Activated CD4-positive, alpha-beta memory T cell treated with anti-CD3 and anti-CD28 coated beads, Interleukin-2, amount 10 ng/mL, durations not matched to agents 7 days and 5 days (primary cell): ENCODE measurements at regions of chr14 and their contacts with region 1.

Region 1: GRCh38 chr14:52741865-52742264 is 11.9 kb downstream of the STYX start:
- DNase-seq: no peak
- H3K4me3 Mint-ChIP-seq: peak overlapping the region; percentile 66
- H3K27ac Mint-ChIP-seq: peak overlapping the region; percentile 94
- H3K4me1 Mint-ChIP-seq: peaks cover 53% of the 10 kb centered on the region
- H3K27me3 Mint-ChIP-seq: no peaks in the 10 kb centered on the region

Region 2: DNA sequence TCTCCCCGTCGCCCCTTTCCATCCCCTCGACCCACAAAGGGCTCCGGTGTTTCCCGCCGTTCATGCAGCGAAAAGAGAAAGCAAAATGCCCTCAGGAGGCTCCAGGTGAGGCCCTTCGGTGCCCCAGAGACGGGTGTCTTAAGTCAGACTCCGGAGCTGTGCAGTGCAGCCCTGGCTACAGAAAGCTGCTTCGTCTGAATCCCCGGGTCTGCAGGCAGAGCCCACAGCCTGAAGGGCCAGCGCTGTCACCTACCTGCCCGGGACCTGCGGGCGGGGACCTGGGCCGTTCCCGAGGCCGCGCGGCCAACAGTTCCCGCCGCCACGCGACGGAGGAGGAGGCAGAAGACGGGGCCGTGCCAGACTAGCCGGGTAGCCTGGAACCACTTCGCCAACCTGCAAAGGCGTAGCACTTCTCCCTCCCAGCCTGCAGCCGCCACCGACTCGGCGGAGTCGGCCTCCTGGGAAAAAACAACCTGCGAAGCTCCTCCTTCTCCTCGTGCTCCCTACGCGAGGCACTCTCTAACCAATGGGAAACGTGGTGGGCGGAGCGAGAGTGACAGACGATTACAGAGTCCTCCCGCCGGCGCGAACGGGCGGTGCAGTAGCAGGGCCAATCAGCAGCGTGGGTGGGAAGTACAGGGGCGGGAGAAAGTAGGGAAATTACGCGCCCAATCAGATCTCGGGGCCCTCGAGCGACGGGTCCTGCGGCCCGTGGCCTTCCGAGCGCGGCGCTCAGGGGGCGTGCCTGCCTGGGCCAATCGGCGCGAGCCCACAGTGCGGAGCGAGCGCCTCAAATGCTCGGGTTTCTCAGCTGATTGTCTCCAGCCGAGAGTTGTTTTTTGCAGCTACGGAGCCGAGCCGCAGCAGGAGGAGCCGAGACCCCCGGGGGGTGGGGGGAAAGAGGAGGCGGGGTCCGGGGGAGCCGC is 189.5 kb before region 1 on chr14 and contains the starts of genes GPR137C and TXNDC16:
- CTCF ChIA-PET with region 1: interaction called, 3 read pairs
- POLR2A ChIA-PET with region 1: interaction called, 27 read pairs
- DNase-seq: peak; percentile 100
- H3K4me3 Mint-ChIP-seq: peak within 1 kb of the TSS; percentile 92
- H3K27ac Mint-ChIP-seq: peak within 1 kb of the TSS; percentile 78
- H3K4me1 Mint-ChIP-seq: peaks cover 27% of the 10 kb centered on the region
- H3K27me3 Mint-ChIP-seq: peaks cover 20% of the 10 kb centered on the region
- total RNA-seq, gene GPR137C: 0.30 to 0.88 TPM
- total RNA-seq, gene TXNDC16: 8.8 to 9.4 TPM

Region 3: DNA sequence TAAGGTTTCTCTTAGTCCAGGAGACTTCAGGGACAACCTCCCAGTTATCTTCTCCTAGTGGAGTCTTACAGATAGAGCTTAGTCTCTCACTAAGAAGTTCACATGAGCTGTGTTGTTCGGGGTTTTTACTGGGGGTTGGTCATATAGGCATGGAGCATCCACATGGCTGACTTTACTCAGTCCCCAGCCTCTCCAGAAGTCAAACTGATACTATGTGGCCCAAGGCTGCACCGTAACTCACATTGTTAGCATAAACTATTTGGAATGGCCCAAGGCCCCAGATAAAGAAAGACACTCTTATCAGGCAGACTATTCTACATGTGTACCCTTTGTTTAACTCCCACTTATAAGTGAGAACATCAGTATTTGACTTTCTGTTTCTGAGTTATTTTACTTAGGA is 166.0 kb before region 1 on chr14:
- CTCF ChIA-PET with region 1: no interaction called
- POLR2A ChIA-PET with region 1: no interaction called
- DNase-seq: no peak
- H3K4me3 Mint-ChIP-seq: no peak overlapping the region
- H3K27ac Mint-ChIP-seq: no peak overlapping the region
- H3K4me1 Mint-ChIP-seq: no peaks in the 10 kb centered on the region
- H3K27me3 Mint-ChIP-seq: peaks cover 9% of the 10 kb centered on the region

Region 4: DNA sequence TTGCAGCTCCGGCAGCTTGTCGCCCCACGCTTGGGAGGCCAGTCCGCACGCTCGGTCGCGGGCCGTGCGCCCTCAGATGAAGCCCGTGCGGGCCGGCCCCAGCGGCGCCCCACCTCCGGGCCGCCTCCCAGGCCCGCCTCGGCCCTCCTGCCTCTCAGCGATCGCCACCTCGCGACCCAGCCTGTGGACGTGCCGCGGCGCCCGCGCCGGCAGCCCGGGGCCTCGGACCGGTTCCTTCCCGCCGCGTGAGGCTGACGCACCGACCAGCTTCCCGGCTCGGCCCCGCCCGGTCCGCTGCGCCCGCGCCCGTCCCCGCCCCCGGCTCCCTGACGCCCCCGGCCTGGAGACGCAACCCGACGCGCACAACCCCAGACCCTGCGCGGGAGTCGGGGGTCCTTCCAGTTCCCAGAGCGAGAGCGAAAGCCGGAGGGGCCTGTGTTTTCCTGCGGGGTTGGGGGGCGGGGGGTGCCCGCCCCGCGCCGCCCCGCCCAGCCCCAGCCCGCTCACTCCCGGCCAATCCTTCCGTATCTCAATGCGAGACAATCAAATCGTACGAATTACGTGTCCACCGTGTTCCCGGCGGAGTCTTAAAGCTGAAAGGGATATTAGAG is 46.3 kb before region 1 on chr14 and contains the start of gene ERO1A:
- CTCF ChIA-PET with region 1: interaction called, 4 read pairs
- POLR2A ChIA-PET with region 1: interaction called, 20 read pairs
- DNase-seq: peak; percentile 75
- H3K4me3 Mint-ChIP-seq: peak within 1 kb of the TSS; percentile 92
- H3K27ac Mint-ChIP-seq: peak within 1 kb of the TSS; percentile 98
- H3K4me1 Mint-ChIP-seq: peaks cover 42% of the 10 kb centered on the region
- H3K27me3 Mint-ChIP-seq: no peaks in the 10 kb centered on the region
- total RNA-seq, gene ERO1A: 256 to 270 TPM

Region 5: DNA sequence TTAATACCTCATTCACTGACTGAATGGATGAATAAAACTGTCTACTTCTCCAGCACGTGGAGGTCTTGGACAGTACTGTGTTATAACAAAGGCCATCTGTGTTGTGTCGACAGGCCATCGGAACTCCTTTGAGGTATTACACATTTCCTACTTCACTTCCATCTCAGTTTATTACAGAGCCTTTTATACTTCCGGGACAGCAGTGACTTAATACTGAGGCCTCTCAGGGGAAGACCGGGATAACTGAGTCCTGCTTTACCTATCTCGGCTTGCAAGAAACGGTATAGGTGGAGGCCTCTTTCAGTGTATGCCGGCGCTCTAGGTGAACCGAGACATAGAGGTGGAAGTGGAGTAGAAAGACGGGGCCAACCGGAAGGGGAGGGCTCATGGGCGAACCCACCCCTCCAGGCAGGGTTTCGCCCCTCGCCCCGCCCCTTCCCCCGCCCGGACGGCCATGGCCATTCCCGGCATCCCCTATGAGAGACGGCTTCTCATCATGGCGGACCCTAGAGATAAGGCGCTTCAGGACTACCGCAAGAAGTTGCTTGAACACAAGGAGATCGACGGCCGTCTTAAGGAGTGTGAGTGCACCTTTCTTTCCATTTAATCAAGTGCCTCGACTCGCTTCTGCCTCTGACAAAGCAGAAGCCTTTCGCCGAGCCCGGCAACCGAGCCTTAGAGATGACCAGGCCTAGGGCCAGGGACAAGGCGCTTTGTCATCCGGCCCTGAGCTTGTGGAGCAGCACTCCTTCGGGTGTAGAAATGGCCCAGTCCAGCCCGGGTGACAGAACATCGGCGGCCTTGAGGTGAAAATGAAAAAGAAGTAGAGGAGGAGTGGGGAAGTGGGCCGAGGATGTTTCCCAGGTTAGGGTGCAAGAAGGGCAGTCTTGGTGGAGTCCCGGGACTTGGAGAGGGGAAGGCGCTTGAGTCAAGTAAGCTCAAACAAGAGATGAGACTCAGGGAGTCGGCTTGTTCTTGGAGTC is 34.9 kb before region 1 on chr14 and contains the start of gene PSMC6:
- CTCF ChIA-PET with region 1: no interaction called
- POLR2A ChIA-PET with region 1: interaction called, 15 read pairs
- DNase-seq: peak; percentile 95
- H3K4me3 Mint-ChIP-seq: peak within 1 kb of the TSS; percentile 92
- H3K27ac Mint-ChIP-seq: peak within 1 kb of the TSS; percentile 91
- H3K4me1 Mint-ChIP-seq: peaks cover 52% of the 10 kb centered on the region
- H3K27me3 Mint-ChIP-seq: no peaks in the 10 kb centered on the region
- total RNA-seq, gene PSMC6: 78.3 to 80.8 TPM

Region 6: DNA sequence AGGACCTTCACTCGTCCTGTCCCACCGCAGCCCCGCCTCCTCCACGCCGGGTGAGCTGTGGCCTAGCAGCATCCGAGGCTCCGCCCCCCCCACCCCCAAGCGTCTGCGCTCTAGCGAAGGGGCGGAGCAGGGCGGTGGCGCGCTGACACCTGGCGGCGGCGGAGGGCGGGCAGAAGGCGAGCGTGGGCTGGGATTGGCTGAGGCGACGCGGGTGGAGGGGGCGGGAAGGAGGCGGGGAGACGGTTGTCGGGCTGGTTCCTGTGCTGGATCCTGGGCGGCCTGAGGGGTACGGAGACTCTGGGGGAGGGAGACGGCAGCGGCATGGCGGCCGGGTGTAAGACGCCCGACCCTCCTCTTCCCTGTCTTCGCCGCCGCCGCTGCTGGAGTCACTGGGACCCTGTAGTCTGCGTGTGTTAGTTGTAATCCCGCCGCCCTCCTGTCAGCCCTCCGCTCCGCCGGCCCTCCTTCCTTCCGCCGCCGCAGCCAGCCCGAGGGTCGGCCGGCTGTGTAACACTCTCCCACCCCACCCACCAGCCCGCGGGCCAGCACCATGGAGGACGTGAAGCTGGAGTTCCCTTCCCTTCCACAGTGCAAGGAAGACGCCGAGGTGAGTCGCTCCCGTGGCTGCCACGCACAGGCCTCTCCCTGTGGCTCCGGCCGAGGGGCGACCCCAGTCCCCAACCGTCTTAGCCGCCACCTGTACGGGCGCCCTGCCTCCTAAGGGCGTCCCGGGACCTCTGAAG is 11.8 kb before region 1 on chr14 and contains the start of gene STYX:
- CTCF ChIA-PET with region 1: interaction called, 3 read pairs
- POLR2A ChIA-PET with region 1: interaction called, 52 read pairs
- DNase-seq: peak; percentile 98
- H3K4me3 Mint-ChIP-seq: peak within 1 kb of the TSS; percentile 95
- H3K27ac Mint-ChIP-seq: peak within 1 kb of the TSS; percentile 83
- H3K4me1 Mint-ChIP-seq: peaks cover 37% of the 10 kb centered on the region
- H3K27me3 Mint-ChIP-seq: no peaks in the 10 kb centered on the region
- total RNA-seq, gene STYX: 21.0 to 25.1 TPM

Region 7: DNA sequence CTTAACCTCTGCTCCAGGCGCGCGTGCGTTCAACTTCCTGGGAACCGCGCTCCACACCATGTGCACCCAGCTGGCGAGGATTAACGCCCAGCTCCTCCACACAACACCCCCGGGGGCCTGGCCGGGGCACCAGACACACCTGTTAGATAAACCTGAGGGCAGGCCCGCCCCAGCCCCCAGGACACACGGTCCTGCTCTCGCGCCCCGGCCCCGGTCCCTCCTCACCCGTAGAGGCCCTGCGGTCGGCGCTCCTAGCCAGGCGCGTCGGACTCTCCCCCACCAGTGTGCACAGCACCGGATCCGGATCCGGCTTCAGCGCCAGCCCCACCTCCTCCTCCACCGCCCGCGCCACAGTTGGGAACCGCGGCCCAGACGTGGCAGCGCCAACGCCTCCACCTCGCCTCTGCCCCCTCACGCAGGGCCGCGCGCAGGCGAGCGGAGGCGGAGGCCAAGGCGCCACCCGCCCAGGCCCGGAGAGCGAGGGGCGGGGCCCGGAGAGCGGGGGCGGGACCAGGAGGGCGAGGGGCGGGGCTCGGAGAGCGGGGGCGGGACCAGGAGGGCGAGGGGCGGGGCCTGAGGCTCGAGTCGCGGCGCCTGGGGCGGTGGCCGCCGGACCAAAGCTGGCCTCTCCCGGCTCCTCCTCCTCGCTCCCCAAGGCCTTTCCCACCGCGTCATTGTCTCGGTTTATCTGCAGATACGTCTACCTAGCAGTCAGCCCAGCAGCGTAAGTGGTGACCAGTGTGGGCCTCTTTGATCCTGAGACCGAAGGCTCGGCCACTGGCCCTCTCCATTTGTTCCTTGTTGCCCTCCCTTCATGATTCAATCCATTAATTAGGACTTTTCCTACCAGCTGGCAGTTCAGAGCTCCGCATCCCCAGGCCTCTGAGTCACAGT is 49.6 kb after region 1 on chr14 and contains the start of gene GNPNAT1:
- CTCF ChIA-PET with region 1: interaction called, 4 read pairs
- POLR2A ChIA-PET with region 1: interaction called, 21 read pairs
- DNase-seq: peak; percentile 93
- H3K4me3 Mint-ChIP-seq: peak within 1 kb of the TSS; percentile 89
- H3K27ac Mint-ChIP-seq: peak within 1 kb of the TSS; percentile 72
- H3K4me1 Mint-ChIP-seq: peaks cover 29% of the 10 kb centered on the region
- H3K27me3 Mint-ChIP-seq: no peaks in the 10 kb centered on the region
- total RNA-seq, gene GNPNAT1: 10.1 to 13.2 TPM

Region 8: GRCh38 chr14:52936437-52936836 is 194.6 kb after region 1 on chr14:
- CTCF ChIA-PET with region 1: no interaction called
- POLR2A ChIA-PET with region 1: no interaction called
- DNase-seq: no peak
- H3K4me3 Mint-ChIP-seq: no peak overlapping the region
- H3K27ac Mint-ChIP-seq: no peak overlapping the region
- H3K4me1 Mint-ChIP-seq: no peaks in the 10 kb centered on the region
- H3K27me3 Mint-ChIP-seq: peaks cover 9% of the 10 kb centered on the region